ENCODE measurements at regions of chr11 and their contacts with region 1.

Region 1: GRCh38 chr11:73184953-73185671 is 33.0 kb upstream of the P2RY2 start:
- DNase-seq: peak; percentile 87
- H3K4me3 Mint-ChIP-seq: peak overlapping the region; percentile 53
- H3K27ac Mint-ChIP-seq: no peak overlapping the region
- H3K4me1 Mint-ChIP-seq: peaks cover 28% of the 10 kb centered on the region
- H3K27me3 Mint-ChIP-seq: no peaks in the 10 kb centered on the region
- CTCF ChIP-seq: peak; percentile 92

Region 2: GRCh38 chr11:73195231-73195992 is 10.3 kb after region 1 on chr11:
- CTCF ChIA-PET with region 1: interaction called, 14 read pairs
- POLR2A ChIA-PET with region 1: interaction called, 21 read pairs
- intact Hi-C with region 1: no loop called
- DNase-seq: peak; percentile 89
- H3K4me3 Mint-ChIP-seq: no peak overlapping the region
- H3K27ac Mint-ChIP-seq: no peak overlapping the region
- H3K4me1 Mint-ChIP-seq: peaks cover 61% of the 10 kb centered on the region
- H3K27me3 Mint-ChIP-seq: no peaks in the 10 kb centered on the region
- CTCF ChIP-seq: no peak

Region 3: DNA sequence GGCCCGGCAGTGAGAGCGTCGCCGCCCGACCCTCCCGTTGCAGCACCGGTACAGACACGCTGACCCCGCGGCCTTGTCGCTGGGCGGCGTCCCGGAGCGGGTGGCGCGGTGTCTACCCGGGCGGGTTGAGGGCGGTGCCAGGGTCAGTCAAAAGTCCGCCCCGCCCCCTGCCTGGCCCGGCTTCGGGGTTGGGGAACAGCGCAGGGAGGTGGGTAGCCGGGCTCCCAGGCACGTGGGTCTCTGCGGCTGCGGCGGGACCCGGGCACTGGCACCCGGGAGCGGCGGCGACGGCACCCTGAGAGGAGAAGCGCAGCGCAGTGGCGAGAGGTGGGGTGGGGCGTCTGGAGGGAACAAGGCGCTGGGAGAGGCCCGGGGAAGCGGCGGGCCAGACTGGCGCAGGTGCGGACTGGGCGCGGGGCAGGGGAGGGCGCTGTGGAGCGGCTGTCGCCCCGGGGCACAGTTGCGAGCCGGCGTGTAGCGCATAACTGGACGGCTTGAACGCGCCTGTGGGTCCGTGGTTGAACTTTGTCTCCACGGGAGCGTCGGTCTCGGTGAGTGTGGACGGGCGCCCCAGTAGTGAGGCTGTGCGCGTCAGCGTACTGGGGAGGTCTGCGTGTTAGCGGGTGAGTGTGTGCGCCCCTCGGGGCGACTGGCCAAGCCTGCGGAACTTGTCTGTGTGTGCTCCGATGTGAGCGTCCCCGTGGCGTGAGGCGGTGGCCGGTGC is 33.2 kb after region 1 on chr11 and contains the start of gene P2RY2:
- CTCF ChIA-PET with region 1: interaction called, 22 read pairs
- POLR2A ChIA-PET with region 1: interaction called, 4 read pairs
- intact Hi-C with region 1: no loop called
- DNase-seq: peak; percentile 66
- H3K4me3 Mint-ChIP-seq: peak within 1 kb of the TSS; percentile 73
- H3K27ac Mint-ChIP-seq: no peak within 1 kb of the TSS
- H3K4me1 Mint-ChIP-seq: peaks cover 6% of the 10 kb centered on the region
- H3K27me3 Mint-ChIP-seq: no peaks in the 10 kb centered on the region
- CTCF ChIP-seq: peak; percentile 43
- total RNA-seq, gene P2RY2: 0.56 and 1.0 TPM in 2 replicates

Region 4: GRCh38 chr11:73242251-73243079 is 57.4 kb after region 1 on chr11:
- CTCF ChIA-PET with region 1: interaction called, 238 read pairs
- POLR2A ChIA-PET with region 1: interaction called, 43 read pairs
- intact Hi-C with region 1: loop called (anchors 1 kb)
- DNase-seq: peak; percentile 70
- H3K4me3 Mint-ChIP-seq: no peak overlapping the region
- H3K27ac Mint-ChIP-seq: no peak overlapping the region
- H3K4me1 Mint-ChIP-seq: peaks cover 12% of the 10 kb centered on the region
- H3K27me3 Mint-ChIP-seq: peaks cover 12% of the 10 kb centered on the region
- CTCF ChIP-seq: peak; percentile 98

Region 5: DNA sequence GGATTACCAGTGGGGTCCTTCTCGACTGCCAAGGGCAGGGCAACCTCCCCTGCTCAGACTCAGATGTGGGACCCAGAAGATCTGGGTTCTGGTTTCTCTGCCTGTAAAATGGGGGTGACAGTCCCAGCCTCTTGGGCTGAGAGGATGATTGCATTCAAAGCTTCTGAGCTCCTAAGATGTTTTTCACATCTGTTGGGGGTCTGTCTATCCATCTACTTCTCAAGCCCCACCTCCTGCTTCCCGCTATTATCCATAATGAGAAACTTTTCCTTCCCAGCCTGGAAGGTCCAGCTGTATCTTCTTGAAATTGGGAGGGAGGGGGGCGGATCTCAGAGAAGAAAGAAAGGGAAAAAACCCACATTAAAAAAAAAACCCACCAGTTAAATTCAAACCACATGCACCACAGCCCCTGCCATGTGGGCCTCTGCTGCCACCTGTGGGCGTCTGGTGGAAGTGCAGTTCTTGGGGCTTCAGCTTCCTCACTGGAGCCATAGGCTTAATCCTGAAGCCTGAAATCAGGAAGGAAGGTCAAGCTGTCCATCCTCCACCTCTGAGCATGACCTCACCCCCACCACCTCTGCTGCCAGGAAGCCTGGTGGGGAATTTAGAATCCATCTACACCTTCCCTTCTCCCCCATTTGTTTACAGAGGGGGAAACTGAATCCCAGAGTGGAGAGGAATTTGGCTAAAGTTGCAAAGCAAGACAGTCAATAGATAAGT is 150.3 kb after region 1 on chr11:
- CTCF ChIA-PET with region 1: interaction called, 11 read pairs
- POLR2A ChIA-PET with region 1: no interaction called
- intact Hi-C with region 1: no loop called
- DNase-seq: peak; percentile 85
- H3K4me3 Mint-ChIP-seq: no peak overlapping the region
- H3K27ac Mint-ChIP-seq: no peak overlapping the region
- H3K4me1 Mint-ChIP-seq: peaks cover 24% of the 10 kb centered on the region
- H3K27me3 Mint-ChIP-seq: no peaks in the 10 kb centered on the region
- CTCF ChIP-seq: peak; percentile 97

Region 6: DNA sequence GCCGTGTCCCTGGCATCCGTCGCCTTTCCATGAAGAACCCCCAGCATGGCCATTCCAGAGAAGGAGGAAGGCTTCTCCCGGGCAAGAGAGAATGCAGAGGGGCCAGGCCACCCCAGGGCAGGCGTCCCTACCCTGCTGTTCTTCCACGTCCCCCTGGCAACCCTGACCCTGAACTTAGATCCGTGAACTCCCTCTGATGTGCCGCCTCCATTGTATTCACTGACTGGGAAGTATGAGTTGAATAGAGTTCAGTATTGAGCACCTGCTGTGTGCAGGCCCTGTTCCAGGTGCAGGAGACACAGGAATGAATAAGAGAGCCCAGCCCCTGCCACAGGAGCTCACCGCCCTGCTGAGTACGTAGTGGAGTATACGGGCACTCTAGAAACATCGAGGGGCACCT is 162.0 kb after region 1 on chr11:
- CTCF ChIA-PET with region 1: no interaction called
- POLR2A ChIA-PET with region 1: no interaction called
- intact Hi-C with region 1: no loop called
- DNase-seq: no peak
- H3K4me3 Mint-ChIP-seq: no peak overlapping the region
- H3K27ac Mint-ChIP-seq: no peak overlapping the region
- H3K4me1 Mint-ChIP-seq: no peaks in the 10 kb centered on the region
- H3K27me3 Mint-ChIP-seq: no peaks in the 10 kb centered on the region
- CTCF ChIP-seq: no peak

Measured in MCF 10A (cell line).